Activated B cell treated with CpG ODN at 0.5 μM for 24 hours (primary cell): ENCODE measurements at regions of chr19 and their contacts with region 1.

Region 1: GRCh38 chr19:10106100-10106936 is at the start of gene PPAN:
- DNase-seq: peak; percentile 91
- ATAC-seq: peak; percentile 54
- H3K4me3 Mint-ChIP-seq: peak within 1 kb of the TSS; percentile 86
- H3K27ac Mint-ChIP-seq: peak within 1 kb of the TSS; percentile 99
- H3K4me1 Mint-ChIP-seq: peaks cover 73% of the 10 kb centered on the region
- H3K27me3 Mint-ChIP-seq: no peaks in the 10 kb centered on the region
- CTCF ChIP-seq: no peak
- total RNA-seq, gene PPAN: 107 and 119 TPM in 2 replicates

Region 2: GRCh38 chr19:9986787-9987281 is 119.5 kb before region 1 on chr19:
- CTCF ChIA-PET with region 1: no interaction called
- POLR2A ChIA-PET with region 1: no interaction called
- intact Hi-C with region 1: no loop called
- DNase-seq: no peak
- ATAC-seq: no peak
- H3K4me3 Mint-ChIP-seq: no peak overlapping the region
- H3K27ac Mint-ChIP-seq: no peak overlapping the region
- H3K4me1 Mint-ChIP-seq: peaks cover 6% of the 10 kb centered on the region
- H3K27me3 Mint-ChIP-seq: peaks cover 12% of the 10 kb centered on the region
- CTCF ChIP-seq: no peak

Region 3: GRCh38 chr19:10085641-10086590 is 20.4 kb before region 1 on chr19 and contains the start of gene SHFL:
- CTCF ChIA-PET with region 1: no interaction called
- POLR2A ChIA-PET with region 1: interaction called, 10 read pairs
- intact Hi-C with region 1: loop called (anchors 1 kb)
- DNase-seq: peak; percentile 82
- ATAC-seq: peak; percentile 92
- H3K4me3 Mint-ChIP-seq: peak within 1 kb of the TSS; percentile 90
- H3K27ac Mint-ChIP-seq: peak within 1 kb of the TSS; percentile 85
- H3K4me1 Mint-ChIP-seq: peaks cover 14% of the 10 kb centered on the region
- H3K27me3 Mint-ChIP-seq: no peaks in the 10 kb centered on the region
- CTCF ChIP-seq: no peak
- total RNA-seq, gene SHFL: 61.3 and 61.4 TPM in 2 replicates

Region 4: GRCh38 chr19:10194500-10195289 is 88.4 kb after region 1 on chr19 and contains the start of gene DNMT1:
- CTCF ChIA-PET with region 1: no interaction called
- POLR2A ChIA-PET with region 1: interaction called, 8 read pairs
- intact Hi-C with region 1: loop called (anchors 10 kb)
- DNase-seq: peak; percentile 94
- ATAC-seq: peak; percentile 97
- H3K4me3 Mint-ChIP-seq: peak within 1 kb of the TSS; percentile 94
- H3K27ac Mint-ChIP-seq: peak within 1 kb of the TSS; percentile 89
- H3K4me1 Mint-ChIP-seq: peaks cover 34% of the 10 kb centered on the region
- H3K27me3 Mint-ChIP-seq: no peaks in the 10 kb centered on the region
- CTCF ChIP-seq: no peak
- total RNA-seq, gene DNMT1: 136 and 156 TPM in 2 replicates

Region 5: GRCh38 chr19:10238172-10238783 is 132.0 kb after region 1 on chr19:
- CTCF ChIA-PET with region 1: no interaction called
- POLR2A ChIA-PET with region 1: interaction called, 7 read pairs
- intact Hi-C with region 1: loop called (anchors 2 kb)
- DNase-seq: no peak
- ATAC-seq: no peak
- H3K4me3 Mint-ChIP-seq: no peak overlapping the region
- H3K27ac Mint-ChIP-seq: peak overlapping the region; percentile 73
- H3K4me1 Mint-ChIP-seq: peaks cover 51% of the 10 kb centered on the region
- H3K27me3 Mint-ChIP-seq: no peaks in the 10 kb centered on the region
- CTCF ChIP-seq: no peak

Region 6: DNA sequence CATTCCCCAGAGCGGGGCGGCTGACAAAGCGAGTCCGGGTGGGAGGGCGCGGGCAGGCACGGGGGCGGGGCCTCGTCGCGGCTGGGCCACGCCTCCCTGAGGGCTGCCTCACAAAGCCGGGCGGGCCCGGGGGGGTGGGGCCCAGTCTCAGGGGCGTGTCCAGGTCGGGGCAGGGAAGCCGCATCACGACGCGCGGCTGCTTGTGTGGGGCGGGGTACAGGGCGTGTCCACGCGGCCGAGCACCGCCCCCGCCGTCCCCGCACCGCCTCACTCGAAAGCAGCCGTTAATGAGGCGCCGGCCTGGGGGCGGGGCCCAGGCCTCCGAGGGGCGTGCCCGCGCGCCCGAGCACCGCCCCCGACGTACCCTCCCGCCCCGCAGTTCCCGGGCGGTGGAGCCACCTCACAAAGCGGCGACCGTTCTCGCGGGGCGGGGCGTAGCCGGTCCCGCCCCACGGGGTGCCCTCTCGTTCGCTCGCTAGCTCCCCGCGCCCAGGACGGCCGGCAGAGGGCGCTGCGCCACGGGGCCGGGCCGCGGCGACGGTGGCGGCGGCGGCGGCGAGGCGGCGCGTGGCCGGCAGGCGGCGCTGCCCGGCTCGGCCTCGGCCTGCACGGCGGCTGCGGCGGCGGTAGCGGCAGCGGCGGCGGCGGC is 764.8 kb after region 1 on chr19 and contains the start of gene CARM1:
- CTCF ChIA-PET with region 1: no interaction called
- POLR2A ChIA-PET with region 1: interaction called, 3 read pairs
- intact Hi-C with region 1: loop called (anchors 10 kb)
- DNase-seq: peak; percentile 100
- ATAC-seq: peak; percentile 84
- H3K4me3 Mint-ChIP-seq: peak within 1 kb of the TSS; percentile 83
- H3K27ac Mint-ChIP-seq: peak within 1 kb of the TSS; percentile 88
- H3K4me1 Mint-ChIP-seq: peaks cover 44% of the 10 kb centered on the region
- H3K27me3 Mint-ChIP-seq: no peaks in the 10 kb centered on the region
- CTCF ChIP-seq: no peak
- total RNA-seq, gene CARM1: 32.3 and 39.1 TPM in 2 replicates